AG04449 (cell line): ENCODE measurements at regions of chr16 and their contacts with region 1.

Region 1: GRCh38 chr16:55465077-55465896 is 13.7 kb upstream of the MMP2 start:
- DNase-seq: no peak
- H3K4me3 ChIP-seq: no peak overlapping the region
- CTCF ChIP-seq: peak; percentile 97

Region 2: GRCh38 chr16:55189682-55190636 is 275.3 kb before region 1 on chr16:
- CTCF ChIA-PET with region 1: no interaction called
- POLR2A ChIA-PET with region 1: no interaction called
- DNase-seq: no peak
- H3K4me3 ChIP-seq: no peak overlapping the region
- CTCF ChIP-seq: no peak

Region 3: DNA sequence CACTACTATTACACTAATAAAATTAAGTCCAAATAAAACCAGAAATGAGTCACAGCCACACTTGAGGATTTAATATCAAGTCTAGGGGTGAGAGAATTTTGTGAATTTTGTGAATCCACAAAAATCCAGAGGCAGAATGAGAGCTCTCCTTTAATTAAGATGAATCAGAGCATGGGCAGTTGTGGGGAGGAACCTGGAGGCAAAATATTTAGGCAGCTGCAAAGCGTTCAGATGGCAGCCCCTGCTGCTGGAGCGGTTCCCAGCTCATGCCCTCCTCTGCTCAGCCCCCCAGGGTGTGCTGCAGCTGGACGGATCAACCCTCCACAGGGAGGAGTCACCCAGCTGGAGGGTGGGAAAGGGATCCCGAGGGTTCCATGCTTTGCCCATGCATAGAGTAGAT is 184.7 kb before region 1 on chr16:
- CTCF ChIA-PET with region 1: no interaction called
- POLR2A ChIA-PET with region 1: no interaction called
- DNase-seq: no peak
- H3K4me3 ChIP-seq: no peak overlapping the region
- CTCF ChIP-seq: no peak

Region 4: DNA sequence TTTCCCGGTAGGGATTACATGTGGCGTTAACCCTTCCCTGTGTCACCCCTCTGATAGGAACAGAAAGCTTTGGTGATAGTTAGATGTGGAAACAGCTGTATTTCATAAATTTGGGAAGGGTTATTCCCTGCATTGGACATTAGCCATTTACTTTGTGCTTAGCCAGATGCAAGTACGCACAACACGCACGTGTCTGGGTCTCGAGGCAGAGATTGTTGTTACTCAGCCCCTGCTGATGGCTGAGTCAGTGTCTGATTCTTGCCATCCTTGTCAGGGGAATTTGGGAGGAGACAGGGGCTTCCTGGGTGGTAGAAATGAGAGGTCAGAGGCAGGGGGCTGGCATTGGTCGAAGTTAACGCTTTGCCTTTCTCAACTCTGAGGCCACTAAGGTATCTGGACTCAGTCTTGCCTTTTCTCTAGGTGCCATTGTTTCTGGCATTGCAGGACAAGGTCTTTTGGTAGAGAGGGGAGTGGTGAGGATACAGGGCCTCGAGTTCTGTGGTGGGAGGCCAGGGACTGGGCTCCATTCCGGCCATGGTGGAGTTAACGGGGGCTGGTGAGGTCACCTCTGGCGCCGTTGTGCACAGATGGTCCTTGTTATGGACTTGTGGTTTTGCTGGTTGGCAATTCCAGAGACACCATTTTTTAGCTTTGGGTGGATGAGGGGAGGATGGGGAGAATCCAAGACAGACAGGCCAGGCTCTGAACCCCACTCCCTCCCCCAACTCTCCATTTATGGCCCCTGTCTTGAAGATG is 21.9 kb after region 1 on chr16:
- CTCF ChIA-PET with region 1: interaction called, 26 read pairs
- POLR2A ChIA-PET with region 1: no interaction called
- DNase-seq: peak; percentile 79
- H3K4me3 ChIP-seq: no peak overlapping the region
- CTCF ChIP-seq: no peak

Region 5: GRCh38 chr16:55508941-55509931 is 43.9 kb after region 1 on chr16 and contains the start of gene LPCAT2:
- CTCF ChIA-PET with region 1: interaction called, 44 read pairs
- POLR2A ChIA-PET with region 1: no interaction called
- DNase-seq: no peak
- H3K4me3 ChIP-seq: peak within 1 kb of the TSS; percentile 77
- CTCF ChIP-seq: no peak

Region 6: DNA sequence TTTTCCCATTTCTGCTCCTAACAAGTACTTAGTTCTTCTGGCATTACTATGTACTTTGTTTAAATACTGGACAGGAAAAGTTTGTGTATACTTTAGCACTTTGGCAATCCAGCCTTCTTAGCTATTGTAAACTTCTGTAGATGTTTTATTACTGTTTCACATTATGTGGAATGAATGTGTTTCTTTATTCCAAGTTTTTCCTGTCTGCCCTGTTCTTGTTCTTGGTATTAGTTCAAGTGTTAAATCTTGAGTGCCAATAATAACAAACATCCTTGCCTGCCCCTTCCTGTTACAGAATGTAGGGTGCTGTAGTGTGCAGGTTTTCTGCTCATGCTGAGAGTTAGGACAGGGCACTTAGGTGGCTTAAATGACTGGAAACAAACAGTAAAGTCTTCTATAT is 93.9 kb after region 1 on chr16:
- CTCF ChIA-PET with region 1: interaction called, 20 read pairs
- POLR2A ChIA-PET with region 1: no interaction called
- DNase-seq: no peak
- H3K4me3 ChIP-seq: no peak overlapping the region
- CTCF ChIP-seq: no peak

Region 7: GRCh38 chr16:55643161-55643970 is 178.1 kb after region 1 on chr16:
- CTCF ChIA-PET with region 1: interaction called, 12 read pairs
- POLR2A ChIA-PET with region 1: no interaction called
- DNase-seq: no peak
- H3K4me3 ChIP-seq: no peak overlapping the region
- CTCF ChIP-seq: no peak

Region 8: DNA sequence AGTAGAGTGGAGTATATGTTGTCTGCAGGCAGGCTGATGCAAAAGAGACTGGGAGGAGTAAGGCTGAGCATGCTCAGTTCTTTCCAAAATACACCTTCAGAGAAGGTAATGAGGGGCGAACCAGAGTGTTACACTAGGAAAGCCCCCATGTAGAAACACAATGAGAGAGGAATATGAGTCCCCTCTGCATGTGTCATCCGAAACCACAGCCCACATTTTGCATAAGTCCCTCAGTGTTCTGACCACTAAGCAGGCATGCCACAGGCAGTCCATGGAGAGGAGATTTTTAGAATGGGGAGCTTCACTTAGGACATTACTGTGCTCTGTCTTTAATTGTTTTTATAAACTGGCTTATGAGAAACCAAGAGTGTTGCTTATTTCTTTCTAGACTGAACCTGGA is 222.5 kb after region 1 on chr16:
- CTCF ChIA-PET with region 1: interaction called, 17 read pairs
- POLR2A ChIA-PET with region 1: no interaction called
- DNase-seq: no peak
- H3K4me3 ChIP-seq: no peak overlapping the region
- CTCF ChIP-seq: no peak

Region 9: DNA sequence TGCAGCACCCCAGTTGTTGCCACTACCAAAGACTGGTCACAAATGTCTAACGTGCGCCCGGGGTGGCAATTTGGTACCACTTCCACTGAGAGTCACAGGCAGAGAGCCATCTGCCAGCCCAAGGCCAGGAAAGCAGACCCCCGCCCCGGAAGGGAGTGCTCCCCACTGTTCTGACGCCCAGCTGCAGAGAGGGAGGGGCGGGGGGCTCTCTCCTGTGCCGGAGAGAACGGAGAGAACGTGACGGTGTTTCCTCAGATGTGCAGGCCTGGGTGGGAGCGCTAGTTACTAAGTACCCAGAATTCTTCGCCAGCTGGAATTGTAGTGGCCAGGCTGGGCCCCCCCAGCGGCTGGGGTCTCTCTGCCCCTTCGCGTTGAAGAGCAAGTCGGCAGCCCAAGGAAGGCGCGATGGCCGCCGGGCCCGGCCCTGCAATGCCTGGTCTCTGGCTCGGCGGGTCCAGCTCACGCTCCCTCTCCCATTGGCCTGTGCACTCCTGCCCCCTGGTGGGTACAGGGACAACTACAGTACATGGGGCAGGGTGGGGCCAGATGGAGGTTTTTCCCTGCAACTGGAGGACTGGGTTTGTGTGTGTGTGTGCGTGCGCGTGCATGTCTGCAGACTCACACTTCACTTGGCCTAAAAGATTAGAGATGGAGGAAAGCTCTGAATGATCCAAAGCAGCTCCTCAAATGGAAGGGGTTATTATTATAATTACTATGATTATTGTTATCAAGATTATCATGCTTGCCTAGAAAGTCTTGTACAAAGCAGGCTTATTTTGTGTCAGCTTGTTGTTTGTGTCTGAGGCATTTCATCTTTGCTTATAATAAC is 852.9 kb after region 1 on chr16:
- CTCF ChIA-PET with region 1: interaction called, 11 read pairs
- POLR2A ChIA-PET with region 1: no interaction called
- DNase-seq: no peak
- H3K4me3 ChIP-seq: peak overlapping the region; percentile 33
- CTCF ChIP-seq: peak; percentile 97